ENCODE measurements at regions of chr3 and their contacts with region 1.

Region 1: DNA sequence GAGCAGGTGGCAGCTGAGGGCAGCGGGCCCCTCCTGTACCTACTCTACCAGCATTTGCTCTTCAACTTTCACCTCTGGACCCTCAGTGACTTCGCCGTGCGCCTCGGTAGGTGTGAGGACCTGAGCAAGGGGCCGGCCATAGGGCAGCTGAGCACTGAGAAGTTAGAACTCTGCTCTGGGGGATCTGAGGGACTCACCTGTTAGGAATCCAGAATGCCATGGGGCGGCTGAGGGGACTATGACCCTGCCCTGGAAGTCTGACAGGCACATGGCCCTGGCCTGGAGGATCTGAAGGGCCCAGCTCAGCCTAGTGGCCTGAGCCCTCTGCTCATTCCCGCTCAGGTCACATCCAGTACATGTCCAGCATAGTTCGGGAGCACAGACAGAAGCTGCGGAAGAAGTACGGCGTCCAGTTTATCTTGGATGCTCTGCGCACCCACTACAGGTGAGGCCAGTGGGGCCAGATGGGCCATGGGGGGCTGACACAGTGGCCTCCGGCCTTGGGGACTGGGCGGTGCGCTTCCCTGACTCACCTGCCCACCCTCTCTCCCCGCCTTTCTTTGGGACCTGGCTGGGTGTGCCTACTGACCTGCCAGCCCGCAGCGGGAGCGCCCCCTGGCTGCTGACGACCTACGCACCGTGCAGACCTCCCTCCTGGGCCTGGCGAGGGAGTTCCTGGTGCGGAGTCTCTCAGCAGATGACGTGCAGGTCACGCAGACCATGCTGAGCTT is 18.8 kb downstream of the NBEAL2 start:
- DNase-seq: peak in 2 of 3 donors; percentile 73 to 74
- ATAC-seq: peak; percentile 64 to 84 (median 79)
- H3K4me3 ChIP-seq: no peak overlapping the region
- H3K27ac ChIP-seq: no peak overlapping the region
- H3K4me1 ChIP-seq: peaks cover 0 to 4% (median 0%) of the 10 kb centered on the region in 4 donors
- H3K27me3 ChIP-seq: no peaks in the 10 kb centered on the region
- CTCF ChIP-seq: peak; percentile 60 to 78 (median 74)
- POLR2A ChIP-seq: no peak

Region 2: GRCh38 chr3:46882377-46883053 is 115.8 kb before region 1 on chr3:
- intact Hi-C with region 1: no loop called
- DNase-seq: no peak
- ATAC-seq: peak; percentile 21 to 51 (median 27)
- H3K4me3 ChIP-seq: peak overlapping the region; percentile 29 to 46 (median 40)
- H3K27ac ChIP-seq: peak overlapping the region; percentile 21 to 63 (median 37)
- H3K4me1 ChIP-seq: peaks cover 0 to 16% (median 0%) of the 10 kb centered on the region in 4 donors
- H3K27me3 ChIP-seq: no peaks in the 10 kb centered on the region
- CTCF ChIP-seq: no peak
- POLR2A ChIP-seq: no peak

Region 3: GRCh38 chr3:46923559-46924350 is 74.5 kb before region 1 on chr3:
- intact Hi-C with region 1: loop called (anchors 10 kb)
- DNase-seq: peak in 2 of 3 donors; percentile 54 to 58
- ATAC-seq: peak; percentile 50 to 68 (median 58)
- H3K4me3 ChIP-seq: no peak overlapping the region
- H3K27ac ChIP-seq: no peak overlapping the region
- H3K4me1 ChIP-seq: peaks cover 0 to 31% (median 0%) of the 10 kb centered on the region in 4 donors
- H3K27me3 ChIP-seq: no peaks in the 10 kb centered on the region
- CTCF ChIP-seq: peak; percentile 60 to 66 (median 64)
- POLR2A ChIP-seq: no peak

Measured in right lobe of liver (tissue), 6 donors.